Mammary epithelial cell (primary cell): ENCODE measurements at regions of chr10 and their contacts with region 1.

Region 1: GRCh38 chr10:104231784-104232612 is at the start of gene CFAP43:
- DNase-seq: peak; percentile 96
- H3K4me3 ChIP-seq: peak within 1 kb of the TSS; percentile 60 to 98 (median 77)
- H3K27ac ChIP-seq: peak within 1 kb of the TSS; percentile 82
- H3K4me1 ChIP-seq: peaks cover 5% of the 10 kb centered on the region
- H3K27me3 ChIP-seq: no peaks in the 10 kb centered on the region
- CTCF ChIP-seq: no peak
- total RNA-seq, gene CFAP43: 0.33 TPM in 1 of 2 donors, not detected in the other

Region 2: DNA sequence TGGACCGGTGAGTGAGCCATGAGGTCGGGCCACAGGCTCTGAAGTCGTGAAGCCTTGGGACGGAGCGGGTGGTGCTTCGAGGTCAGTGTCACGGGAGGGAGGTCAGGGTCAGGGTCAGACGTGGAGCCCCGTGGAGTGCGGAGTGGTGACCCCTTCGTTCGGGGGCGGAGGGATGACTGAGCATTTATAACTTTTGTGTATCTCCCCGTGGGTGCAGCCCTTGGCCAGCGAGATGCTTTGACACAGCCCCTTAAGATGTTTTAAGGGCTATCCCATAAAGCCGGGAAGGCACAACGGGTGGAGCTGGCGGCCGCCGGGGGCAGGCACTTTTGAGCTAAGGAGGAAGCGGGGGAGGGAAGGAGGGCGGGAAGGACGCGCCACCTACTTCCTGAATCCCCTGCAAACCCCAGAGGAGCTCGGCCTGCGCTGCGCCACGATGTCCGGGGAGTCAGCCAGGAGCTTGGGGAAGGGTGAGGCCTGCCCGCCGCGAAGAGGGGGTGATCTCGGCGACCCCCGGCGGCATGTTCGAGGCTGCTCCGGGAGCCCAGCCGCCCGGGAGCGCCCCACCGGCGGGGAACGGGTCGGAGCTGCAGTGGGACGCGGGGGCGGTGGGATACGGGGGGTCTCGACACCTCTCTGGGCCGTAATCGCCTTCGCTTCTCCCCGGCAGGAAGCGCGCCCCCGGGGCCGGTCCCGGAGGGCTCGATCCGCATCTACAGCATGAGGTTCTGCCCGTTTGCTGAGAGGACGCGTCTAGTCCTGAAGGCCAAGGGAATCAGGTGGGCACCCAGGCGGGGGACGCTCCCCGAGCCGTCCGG is 22.7 kb after region 1 on chr10 and contains the start of gene GSTO1:
- CTCF ChIA-PET with region 1: no interaction called
- dilution Hi-C with region 1: no loop called
- in situ Hi-C with region 1: no loop called
- intact Hi-C with region 1: loop called (anchors 2 kb)
- DNase-seq: peak; percentile 55
- H3K4me3 ChIP-seq: peak within 1 kb of the TSS; percentile 80 to 85 (median 81)
- H3K27ac ChIP-seq: peak within 1 kb of the TSS; percentile 82
- H3K4me1 ChIP-seq: peaks cover 35% of the 10 kb centered on the region
- H3K27me3 ChIP-seq: no peaks in the 10 kb centered on the region
- CTCF ChIP-seq: peak in 1 of 2 donors; percentile 17
- total RNA-seq, gene GSTO1: 203 to 205 TPM